ENCODE measurements at regions of chr1 and their contacts with region 1.

Region 1: DNA sequence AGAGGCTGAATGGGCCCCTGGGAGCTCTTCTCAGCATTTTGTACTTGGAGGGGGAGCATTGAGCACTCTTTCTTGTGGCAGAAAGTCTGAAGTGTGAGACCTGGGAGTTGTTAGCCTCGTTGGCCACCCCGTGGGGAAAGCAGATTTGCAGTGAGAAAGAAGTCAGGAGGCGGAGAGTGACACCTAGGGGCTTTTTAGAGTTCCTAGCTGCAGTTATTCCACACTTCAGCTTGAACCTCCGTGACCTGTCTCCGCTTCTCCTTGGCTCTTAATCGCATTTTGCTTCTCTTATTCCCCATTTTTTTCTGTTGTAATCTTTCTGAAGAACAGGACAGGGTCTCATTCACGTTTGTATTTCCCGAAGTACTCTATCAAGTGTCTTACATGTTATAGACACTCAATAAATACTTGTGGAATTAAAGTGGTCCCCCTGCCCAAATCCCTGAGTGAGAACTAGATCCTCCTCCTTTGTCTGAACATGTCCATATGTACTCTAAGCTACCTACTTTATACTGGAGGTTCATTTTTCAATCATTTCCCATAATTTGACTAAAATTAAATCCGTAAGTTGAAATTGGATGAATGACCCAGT is 14.5 kb upstream of the C1orf141 start:
- DNase-seq: peak; percentile 86
- H3K4me3 Mint-ChIP-seq: no peak overlapping the region
- H3K27ac Mint-ChIP-seq: peak overlapping the region; percentile 14
- H3K4me1 Mint-ChIP-seq: peaks cover 14% of the 10 kb centered on the region
- H3K27me3 Mint-ChIP-seq: peaks cover 33% of the 10 kb centered on the region
- CTCF ChIP-seq: peak; percentile 77

Region 2: DNA sequence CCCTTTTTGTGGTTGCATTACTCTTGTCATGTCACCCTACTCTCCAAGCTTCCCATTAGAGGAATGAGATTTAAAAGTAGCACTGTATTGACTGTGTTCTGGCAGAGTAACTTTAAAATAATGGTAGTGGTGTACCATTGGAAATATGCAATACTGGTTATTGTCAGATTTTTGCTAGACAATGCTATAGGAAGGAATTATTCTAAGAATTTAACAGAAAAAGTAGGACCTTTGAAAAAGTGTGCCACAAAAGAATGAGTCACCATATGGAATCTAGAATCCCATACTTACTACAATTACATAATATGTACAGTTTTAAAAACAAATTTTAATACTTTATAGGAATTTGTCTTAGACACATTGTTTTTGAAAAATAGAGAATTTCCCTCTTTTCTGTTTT is 210.7 kb before region 1 on chr1:
- CTCF ChIA-PET with region 1: interaction called, 11 read pairs
- POLR2A ChIA-PET with region 1: no interaction called
- intact Hi-C with region 1: no loop called
- DNase-seq: peak; percentile 38
- H3K4me3 Mint-ChIP-seq: no peak overlapping the region
- H3K27ac Mint-ChIP-seq: peak overlapping the region; percentile 23
- H3K4me1 Mint-ChIP-seq: peaks cover 38% of the 10 kb centered on the region
- H3K27me3 Mint-ChIP-seq: no peaks in the 10 kb centered on the region
- CTCF ChIP-seq: no peak

Region 3: DNA sequence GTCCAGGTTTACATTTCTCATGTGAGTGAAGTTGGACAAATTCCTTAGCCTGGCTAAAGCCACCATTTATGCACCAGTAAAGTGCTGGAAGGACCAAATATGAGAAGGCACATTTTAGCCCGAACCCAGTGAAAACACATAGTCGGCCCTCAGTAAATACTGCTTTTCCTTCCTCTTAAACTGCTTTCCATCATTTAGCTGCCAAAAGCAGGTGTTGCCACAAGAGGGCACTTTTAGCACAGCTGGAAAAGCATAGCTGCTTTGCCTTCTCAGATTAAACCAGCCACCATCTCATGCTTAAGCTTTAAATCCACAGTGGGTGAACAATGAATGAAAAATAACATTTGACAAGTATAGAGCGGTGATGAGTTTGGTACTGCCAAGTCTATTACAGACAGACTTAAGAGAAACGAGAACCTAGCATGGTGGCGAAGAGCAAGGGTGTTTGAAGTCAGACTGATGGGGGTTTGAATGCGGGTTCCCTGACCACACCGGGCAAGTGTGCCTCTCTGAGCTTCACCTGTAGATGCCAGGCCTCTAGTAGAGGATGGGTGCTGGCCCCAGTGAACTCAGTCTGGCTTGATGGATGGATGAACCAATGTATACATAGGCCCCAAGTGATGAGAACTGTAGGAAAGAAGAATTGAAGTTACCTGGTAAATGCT is 153.1 kb before region 1 on chr1:
- CTCF ChIA-PET with region 1: interaction called, 193 read pairs
- POLR2A ChIA-PET with region 1: interaction called, 33 read pairs
- intact Hi-C with region 1: loop called (anchors 1 kb)
- DNase-seq: peak; percentile 73
- H3K4me3 Mint-ChIP-seq: no peak overlapping the region
- H3K27ac Mint-ChIP-seq: no peak overlapping the region
- H3K4me1 Mint-ChIP-seq: no peaks in the 10 kb centered on the region
- H3K27me3 Mint-ChIP-seq: no peaks in the 10 kb centered on the region
- CTCF ChIP-seq: peak; percentile 69

Region 4: DNA sequence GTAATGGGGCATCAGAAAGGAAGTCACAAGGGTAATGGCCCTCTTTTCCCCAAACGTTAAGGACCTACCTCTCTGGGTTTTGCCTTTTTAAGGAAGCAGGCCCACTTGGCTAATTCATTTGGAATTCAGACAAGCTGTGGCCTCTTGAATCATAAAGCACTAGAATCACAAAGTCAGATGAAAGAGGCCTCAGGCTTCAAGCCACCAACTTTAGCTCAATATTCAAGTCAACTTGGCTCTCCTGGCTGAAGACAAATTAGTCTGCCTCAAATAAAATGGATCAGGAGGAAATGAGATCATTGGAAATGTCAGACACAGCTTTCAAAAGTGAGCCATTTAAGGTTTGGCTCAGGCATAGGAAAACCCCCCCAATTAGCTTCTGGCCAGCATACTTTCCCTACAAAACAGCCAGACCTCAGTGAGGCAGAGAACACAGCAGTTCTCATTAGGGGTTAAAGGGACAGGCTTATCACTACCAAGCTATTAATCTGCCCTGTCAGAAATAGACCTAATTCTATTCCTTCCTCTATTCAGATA is 129.6 kb before region 1 on chr1:
- CTCF ChIA-PET with region 1: interaction called, 25 read pairs
- POLR2A ChIA-PET with region 1: no interaction called
- intact Hi-C with region 1: no loop called
- DNase-seq: no peak
- H3K4me3 Mint-ChIP-seq: no peak overlapping the region
- H3K27ac Mint-ChIP-seq: no peak overlapping the region
- H3K4me1 Mint-ChIP-seq: peaks cover 14% of the 10 kb centered on the region
- H3K27me3 Mint-ChIP-seq: no peaks in the 10 kb centered on the region
- CTCF ChIP-seq: no peak

Region 5: DNA sequence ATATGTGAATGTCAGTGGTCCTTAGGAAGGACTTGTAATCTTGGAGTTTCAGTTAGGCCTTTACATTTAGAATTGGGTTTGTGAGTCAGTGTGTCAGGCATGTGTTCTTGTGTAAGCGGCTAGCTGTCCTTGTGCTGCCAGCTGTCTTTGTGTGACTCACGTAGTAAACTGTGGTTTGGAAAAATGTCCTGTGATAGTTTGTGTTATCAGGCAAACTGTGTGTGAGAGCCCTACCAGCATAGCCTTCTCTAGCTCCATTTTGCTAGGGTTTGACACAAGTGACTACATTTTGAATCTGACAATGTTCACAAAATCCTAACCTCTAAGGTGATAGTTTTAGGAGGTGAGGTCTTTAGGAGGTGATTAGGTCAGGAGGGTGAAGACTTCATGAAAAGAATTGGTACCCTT is 88.5 kb before region 1 on chr1:
- CTCF ChIA-PET with region 1: interaction called, 39 read pairs
- POLR2A ChIA-PET with region 1: interaction called, 9 read pairs
- intact Hi-C with region 1: no loop called
- DNase-seq: peak; percentile 93
- H3K4me3 Mint-ChIP-seq: no peak overlapping the region
- H3K27ac Mint-ChIP-seq: peak overlapping the region; percentile 78
- H3K4me1 Mint-ChIP-seq: peaks cover 30% of the 10 kb centered on the region
- H3K27me3 Mint-ChIP-seq: no peaks in the 10 kb centered on the region
- CTCF ChIP-seq: no peak

Region 6: GRCh38 chr1:67126111-67126746 is 23.0 kb before region 1 on chr1:
- CTCF ChIA-PET with region 1: interaction called, 65 read pairs
- POLR2A ChIA-PET with region 1: interaction called, 3 read pairs
- intact Hi-C with region 1: no loop called
- DNase-seq: peak; percentile 43
- H3K4me3 Mint-ChIP-seq: no peak overlapping the region
- H3K27ac Mint-ChIP-seq: peak overlapping the region; percentile 42
- H3K4me1 Mint-ChIP-seq: peaks cover 7% of the 10 kb centered on the region
- H3K27me3 Mint-ChIP-seq: no peaks in the 10 kb centered on the region
- CTCF ChIP-seq: no peak

Region 7: DNA sequence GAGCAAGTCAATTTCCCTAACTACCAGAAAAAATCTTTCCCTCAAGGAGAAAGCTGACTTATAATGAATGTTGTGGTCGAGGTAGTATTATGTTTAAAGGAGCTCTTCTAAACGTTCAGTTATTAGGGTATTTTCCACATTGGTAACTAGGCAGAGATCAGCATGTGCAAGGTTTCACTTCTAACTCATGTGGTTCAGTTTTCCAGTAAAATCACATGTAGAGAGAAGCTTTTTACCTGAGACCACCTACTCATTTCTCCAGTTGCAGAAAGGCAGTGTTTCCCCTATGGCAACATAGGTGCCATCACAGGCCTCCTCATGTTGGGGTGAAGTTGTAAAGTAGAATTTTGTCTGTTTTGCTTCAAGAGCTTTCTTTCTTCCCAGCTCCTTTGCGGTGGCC is 40.7 kb after region 1 on chr1:
- CTCF ChIA-PET with region 1: no interaction called
- POLR2A ChIA-PET with region 1: no interaction called
- intact Hi-C with region 1: no loop called
- DNase-seq: no peak
- H3K4me3 Mint-ChIP-seq: no peak overlapping the region
- H3K27ac Mint-ChIP-seq: no peak overlapping the region
- H3K4me1 Mint-ChIP-seq: no peaks in the 10 kb centered on the region
- H3K27me3 Mint-ChIP-seq: no peaks in the 10 kb centered on the region
- CTCF ChIP-seq: no peak

Region 8: GRCh38 chr1:67204298-67204980 is 55.2 kb after region 1 on chr1:
- CTCF ChIA-PET with region 1: no interaction called
- POLR2A ChIA-PET with region 1: no interaction called
- intact Hi-C with region 1: no loop called
- DNase-seq: no peak
- H3K4me3 Mint-ChIP-seq: no peak overlapping the region
- H3K27ac Mint-ChIP-seq: no peak overlapping the region
- H3K4me1 Mint-ChIP-seq: no peaks in the 10 kb centered on the region
- H3K27me3 Mint-ChIP-seq: no peaks in the 10 kb centered on the region
- CTCF ChIP-seq: no peak

Region 9: GRCh38 chr1:67214420-67215174 is 65.3 kb after region 1 on chr1:
- CTCF ChIA-PET with region 1: interaction called, 44 read pairs
- POLR2A ChIA-PET with region 1: interaction called, 3 read pairs
- intact Hi-C with region 1: no loop called
- DNase-seq: peak; percentile 48
- H3K4me3 Mint-ChIP-seq: no peak overlapping the region
- H3K27ac Mint-ChIP-seq: no peak overlapping the region
- H3K4me1 Mint-ChIP-seq: no peaks in the 10 kb centered on the region
- H3K27me3 Mint-ChIP-seq: no peaks in the 10 kb centered on the region
- CTCF ChIP-seq: peak; percentile 66

Region 10: DNA sequence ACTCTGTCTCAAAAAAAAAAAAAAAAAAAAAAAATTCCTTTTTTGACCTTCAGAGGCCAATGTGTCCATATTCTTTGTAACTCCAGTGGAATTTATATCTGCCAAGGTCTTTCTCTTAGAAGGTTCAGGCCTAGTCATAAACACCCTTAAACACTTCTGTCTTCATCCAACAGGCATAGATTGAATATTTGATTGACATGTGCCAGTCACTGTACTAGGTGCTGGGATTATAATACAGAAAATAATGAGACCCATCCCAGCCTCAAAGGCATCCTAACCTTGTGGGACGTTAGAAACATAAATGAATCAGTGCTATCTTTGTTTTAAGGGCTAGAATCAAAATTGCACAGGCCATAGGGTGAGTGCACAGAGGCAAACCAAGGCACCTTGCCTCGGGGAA is 343.9 kb after region 1 on chr1:
- CTCF ChIA-PET with region 1: no interaction called
- POLR2A ChIA-PET with region 1: no interaction called
- intact Hi-C with region 1: no loop called
- DNase-seq: no peak
- H3K4me3 Mint-ChIP-seq: no peak overlapping the region
- H3K27ac Mint-ChIP-seq: no peak overlapping the region
- H3K4me1 Mint-ChIP-seq: no peaks in the 10 kb centered on the region
- H3K27me3 Mint-ChIP-seq: no peaks in the 10 kb centered on the region
- CTCF ChIP-seq: no peak